ENCODE measurements at regions of chr11 and their contacts with region 1.

Region 1: DNA sequence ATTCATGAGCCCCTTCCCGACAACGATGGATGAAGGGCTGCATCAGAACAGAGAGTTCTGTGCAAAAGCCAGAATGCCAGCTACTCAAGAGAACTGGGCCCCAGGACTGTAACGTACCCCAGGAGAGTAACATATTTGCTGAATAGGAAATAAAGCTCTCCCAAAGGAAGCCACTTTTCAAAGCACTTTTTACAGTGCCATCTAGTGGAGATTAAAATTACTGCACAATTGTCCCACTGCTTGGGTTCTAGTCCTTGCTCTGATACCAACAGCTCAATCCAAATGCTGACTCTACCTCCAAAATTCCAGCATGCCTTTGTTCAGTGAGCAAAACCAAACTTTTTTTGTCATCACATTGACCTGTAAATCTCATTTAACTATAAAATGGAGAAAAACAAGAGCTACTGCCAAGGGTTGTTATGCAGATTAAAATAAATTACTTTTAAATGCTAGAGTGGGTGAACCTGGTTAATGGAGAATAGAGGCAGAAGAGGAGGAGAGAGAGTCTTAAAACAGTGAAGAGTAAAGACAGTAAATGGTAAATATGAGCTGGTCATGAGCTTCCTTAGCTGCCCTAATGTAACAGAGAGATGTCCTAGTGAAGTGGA is 87.6 kb upstream of the FSHB start:
- DNase-seq: no peak
- ATAC-seq: no peak
- H3K4me3 Mint-ChIP-seq: no peak overlapping the region
- H3K27ac Mint-ChIP-seq: no peak overlapping the region
- H3K4me1 Mint-ChIP-seq: no peaks in the 10 kb centered on the region
- H3K27me3 Mint-ChIP-seq: peaks cover 5% of the 10 kb centered on the region

Region 2: GRCh38 chr11:29343465-29344333 is 799.5 kb before region 1 on chr11:
- CTCF ChIA-PET with region 1: interaction called, 3 read pairs
- POLR2A ChIA-PET with region 1: no interaction called
- intact Hi-C with region 1: loop called in 1 of 2 experiments (anchors 10 kb)
- DNase-seq: peak; percentile 63
- ATAC-seq: peak; percentile 39
- H3K4me3 Mint-ChIP-seq: no peak overlapping the region
- H3K27ac Mint-ChIP-seq: no peak overlapping the region
- H3K4me1 Mint-ChIP-seq: no peaks in the 10 kb centered on the region
- H3K27me3 Mint-ChIP-seq: no peaks in the 10 kb centered on the region

Region 3: DNA sequence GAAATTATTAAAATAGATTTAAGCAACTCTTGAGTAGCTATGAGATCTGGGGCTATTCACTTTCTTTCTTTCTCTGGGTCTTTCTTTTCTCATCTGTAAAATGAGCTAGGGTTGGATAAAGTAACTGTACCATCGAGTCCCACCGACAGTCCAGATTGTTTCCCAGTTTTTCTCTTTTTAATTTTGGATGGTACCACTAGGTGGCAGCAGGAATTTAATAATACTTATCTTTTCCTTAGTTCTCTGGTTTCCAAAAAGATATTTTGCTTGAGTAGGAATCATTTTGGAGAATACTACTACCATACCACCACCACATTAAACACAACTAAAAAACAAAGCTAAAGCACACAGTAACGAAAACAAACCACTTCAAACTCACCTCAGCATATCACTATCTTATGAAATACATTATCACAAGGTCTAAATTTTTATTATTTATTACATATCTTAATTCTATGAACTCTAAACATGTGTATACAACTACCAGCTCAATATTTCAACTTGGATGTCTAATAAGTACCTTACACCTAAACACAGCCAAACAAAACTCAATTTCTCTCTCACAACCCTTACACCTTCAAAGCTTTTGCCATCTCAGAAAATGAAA is 710.4 kb before region 1 on chr11:
- CTCF ChIA-PET with region 1: interaction called, 4 read pairs
- POLR2A ChIA-PET with region 1: no interaction called
- intact Hi-C with region 1: loop called (anchors 2 to 5 kb)
- DNase-seq: no peak
- ATAC-seq: no peak
- H3K4me3 Mint-ChIP-seq: no peak overlapping the region
- H3K27ac Mint-ChIP-seq: no peak overlapping the region
- H3K4me1 Mint-ChIP-seq: no peaks in the 10 kb centered on the region
- H3K27me3 Mint-ChIP-seq: no peaks in the 10 kb centered on the region

Region 4: DNA sequence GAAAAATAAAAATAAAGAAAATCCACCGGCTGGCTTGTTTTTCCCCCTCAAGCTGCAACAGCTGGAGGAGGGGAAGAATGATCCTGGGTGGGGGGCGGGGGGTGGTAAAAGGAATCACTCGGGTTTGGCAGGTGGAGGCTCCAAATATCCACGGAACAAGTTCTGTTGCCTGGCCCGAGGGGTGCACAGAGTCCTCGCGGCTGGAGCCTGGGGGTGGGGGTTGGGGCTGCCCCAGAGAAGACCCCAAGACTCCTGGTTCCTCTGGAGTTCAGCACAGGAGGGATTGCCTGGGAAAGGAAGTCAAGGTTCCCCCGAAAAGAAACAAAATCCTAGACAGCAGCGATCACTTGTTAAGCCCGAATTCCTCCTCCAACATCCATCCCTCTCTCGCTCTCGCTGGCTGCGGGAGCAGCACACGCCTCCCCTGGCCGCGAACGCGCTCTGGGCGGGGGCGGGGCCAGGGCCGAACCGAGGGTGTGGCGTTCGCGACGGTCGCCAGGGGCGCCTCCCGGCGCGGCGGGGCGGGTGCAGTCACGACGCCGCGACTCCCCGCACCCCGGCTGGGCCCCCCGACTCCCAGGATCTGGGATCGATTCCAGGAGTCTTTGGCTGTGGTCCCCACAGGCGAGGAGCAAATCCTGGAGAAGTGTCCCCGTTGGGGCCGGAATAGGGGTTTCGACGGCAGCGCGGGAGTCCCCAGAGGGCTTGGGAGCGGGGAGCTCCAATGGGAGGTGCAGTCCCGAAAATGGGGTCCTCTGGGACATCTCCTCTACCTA is 126.4 kb before region 1 on chr11 and contains the start of gene KCNA4:
- CTCF ChIA-PET with region 1: no interaction called
- POLR2A ChIA-PET with region 1: no interaction called
- intact Hi-C with region 1: no loop called
- DNase-seq: peak; percentile 11
- ATAC-seq: no peak
- H3K4me3 Mint-ChIP-seq: no peak within 1 kb of the TSS
- H3K27ac Mint-ChIP-seq: no peak within 1 kb of the TSS
- H3K4me1 Mint-ChIP-seq: no peaks in the 10 kb centered on the region
- H3K27me3 Mint-ChIP-seq: peaks cover 22% of the 10 kb centered on the region
- total RNA-seq, gene KCNA4: not detected

Region 5: DNA sequence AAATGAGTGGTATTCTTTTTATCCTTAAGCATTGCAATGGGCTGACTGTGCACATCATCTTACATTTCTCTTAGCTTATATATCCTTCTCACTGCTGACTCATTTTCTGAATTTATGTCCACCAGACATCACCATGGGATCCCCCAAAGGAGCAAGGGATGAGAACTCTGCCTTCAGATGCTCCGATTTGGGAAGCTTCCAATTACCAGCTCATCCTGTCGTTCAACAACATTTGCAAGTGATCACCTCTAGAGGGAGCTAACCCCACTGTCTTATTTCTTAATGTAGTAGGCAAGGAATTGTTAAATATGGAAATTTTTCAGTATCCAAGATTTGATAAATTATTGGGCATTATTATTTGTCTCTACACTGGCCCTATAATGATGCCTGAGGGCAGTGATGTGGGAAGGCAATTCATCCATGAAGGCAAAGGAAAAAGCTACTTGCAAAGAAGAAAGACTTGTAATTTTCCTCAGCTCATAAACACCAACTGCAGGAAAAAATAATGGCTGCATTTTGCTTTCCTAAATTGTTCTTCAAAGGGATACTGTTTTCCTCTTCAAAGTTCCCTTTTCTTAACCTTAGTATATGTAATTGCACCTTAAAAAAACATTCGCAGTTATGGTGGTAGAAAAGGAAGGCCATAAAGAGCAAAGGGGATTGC is 14.8 kb before region 1 on chr11:
- CTCF ChIA-PET with region 1: interaction called, 29 read pairs
- POLR2A ChIA-PET with region 1: no interaction called
- intact Hi-C with region 1: no loop called
- DNase-seq: no peak
- ATAC-seq: no peak
- H3K4me3 Mint-ChIP-seq: no peak overlapping the region
- H3K27ac Mint-ChIP-seq: no peak overlapping the region
- H3K4me1 Mint-ChIP-seq: no peaks in the 10 kb centered on the region
- H3K27me3 Mint-ChIP-seq: no peaks in the 10 kb centered on the region

Region 6: DNA sequence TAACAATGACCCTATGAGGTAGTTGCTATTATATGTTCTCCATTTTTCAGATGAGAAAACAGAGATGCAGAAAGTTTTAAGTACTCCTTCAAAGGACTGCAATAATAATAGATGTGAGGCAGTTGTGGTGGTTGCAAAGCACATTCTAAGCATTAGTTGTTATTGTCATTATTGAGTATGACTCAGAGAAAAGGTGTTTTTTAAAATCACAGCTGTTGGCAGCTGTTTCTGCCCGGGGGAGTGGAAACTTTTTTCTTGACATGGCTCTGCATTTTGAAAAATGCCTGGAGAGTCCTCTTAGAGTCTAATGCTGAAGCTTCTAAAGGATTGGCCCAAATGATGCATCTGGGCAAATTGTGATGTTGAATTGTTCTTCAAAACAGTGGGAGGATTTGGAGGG is 687.5 kb after region 1 on chr11:
- CTCF ChIA-PET with region 1: no interaction called
- POLR2A ChIA-PET with region 1: no interaction called
- intact Hi-C with region 1: loop called in 1 of 2 experiments (anchors 10 kb)
- DNase-seq: no peak
- ATAC-seq: no peak
- H3K4me3 Mint-ChIP-seq: no peak overlapping the region
- H3K27ac Mint-ChIP-seq: no peak overlapping the region
- H3K4me1 Mint-ChIP-seq: no peaks in the 10 kb centered on the region
- H3K27me3 Mint-ChIP-seq: no peaks in the 10 kb centered on the region

Measured in activated CD4-positive, alpha-beta T cell treated with anti-CD3 and anti-CD28 coated beads for 36 hours (primary cell).